Activated naive CD8-positive, alpha-beta T cell treated with anti-CD3 and anti-CD28 coated beads, Interleukin-2, amount 10 ng/mL, durations not matched to agents 7 days and 5 days (primary cell): ENCODE measurements at regions of chr5 and their contacts with region 1.

Region 1: DNA sequence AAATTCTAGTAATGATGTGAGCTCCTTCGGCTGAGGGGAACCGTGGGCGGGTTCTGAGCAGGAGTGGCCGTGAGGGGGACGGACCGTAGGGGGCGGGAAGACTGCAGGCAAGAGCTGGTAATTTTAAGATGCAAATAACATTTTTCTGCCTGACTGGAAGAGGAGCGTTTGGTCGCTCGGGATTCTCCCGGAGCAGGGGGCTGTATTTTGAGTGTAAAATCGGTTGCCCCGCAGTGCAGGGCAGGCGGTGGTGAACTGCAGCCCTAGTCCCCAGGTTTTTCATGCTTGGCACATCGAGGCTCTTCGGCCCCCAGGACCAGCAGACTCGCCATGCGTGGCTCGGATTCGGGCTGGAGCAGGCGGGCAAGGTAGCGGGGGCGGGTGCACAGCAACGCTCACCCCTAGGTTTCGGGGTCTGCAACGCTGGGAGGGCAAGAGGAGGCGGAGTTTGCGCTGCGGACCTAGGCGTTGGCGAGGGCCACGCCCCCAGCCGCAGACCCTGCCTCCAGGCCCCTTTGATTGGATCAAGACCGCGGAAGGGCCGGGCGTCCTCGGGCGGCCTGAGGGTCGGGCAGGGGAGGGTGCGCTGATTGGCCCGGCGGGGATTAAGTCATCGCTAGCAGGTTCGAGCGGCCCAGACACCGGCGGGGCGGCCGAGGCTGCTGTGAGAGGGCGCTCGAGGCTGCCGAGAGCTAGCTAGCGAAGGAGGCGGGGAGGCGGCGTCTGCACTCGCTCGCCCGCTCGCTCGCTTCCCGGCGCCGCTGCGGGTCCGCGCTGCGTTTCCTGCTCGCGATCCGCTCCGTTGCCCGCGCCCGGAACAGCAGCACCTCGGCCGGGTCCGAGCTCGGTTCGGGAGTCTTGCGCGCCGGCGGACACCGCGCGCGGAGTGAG is at the start of gene ARHGAP26:
- DNase-seq: peak; percentile 92
- ATAC-seq: peak; percentile 97
- H3K4me3 Mint-ChIP-seq: peak within 1 kb of the TSS; percentile 86
- H3K27ac Mint-ChIP-seq: peak within 1 kb of the TSS; percentile 88
- H3K4me1 Mint-ChIP-seq: peaks cover 31% of the 10 kb centered on the region
- H3K27me3 Mint-ChIP-seq: no peaks in the 10 kb centered on the region
- total RNA-seq, gene ARHGAP26: 30.6 to 32.0 TPM

Region 2: GRCh38 chr5:142783601-142784341 is 13.8 kb after region 1 on chr5:
- POLR2A ChIA-PET with region 1: interaction called, 31 read pairs
- DNase-seq: no peak
- ATAC-seq: peak; percentile 84
- H3K4me3 Mint-ChIP-seq: peak overlapping the region; percentile 31
- H3K27ac Mint-ChIP-seq: peak overlapping the region; percentile 60
- H3K4me1 Mint-ChIP-seq: peaks cover 44% of the 10 kb centered on the region
- H3K27me3 Mint-ChIP-seq: no peaks in the 10 kb centered on the region

Region 3: DNA sequence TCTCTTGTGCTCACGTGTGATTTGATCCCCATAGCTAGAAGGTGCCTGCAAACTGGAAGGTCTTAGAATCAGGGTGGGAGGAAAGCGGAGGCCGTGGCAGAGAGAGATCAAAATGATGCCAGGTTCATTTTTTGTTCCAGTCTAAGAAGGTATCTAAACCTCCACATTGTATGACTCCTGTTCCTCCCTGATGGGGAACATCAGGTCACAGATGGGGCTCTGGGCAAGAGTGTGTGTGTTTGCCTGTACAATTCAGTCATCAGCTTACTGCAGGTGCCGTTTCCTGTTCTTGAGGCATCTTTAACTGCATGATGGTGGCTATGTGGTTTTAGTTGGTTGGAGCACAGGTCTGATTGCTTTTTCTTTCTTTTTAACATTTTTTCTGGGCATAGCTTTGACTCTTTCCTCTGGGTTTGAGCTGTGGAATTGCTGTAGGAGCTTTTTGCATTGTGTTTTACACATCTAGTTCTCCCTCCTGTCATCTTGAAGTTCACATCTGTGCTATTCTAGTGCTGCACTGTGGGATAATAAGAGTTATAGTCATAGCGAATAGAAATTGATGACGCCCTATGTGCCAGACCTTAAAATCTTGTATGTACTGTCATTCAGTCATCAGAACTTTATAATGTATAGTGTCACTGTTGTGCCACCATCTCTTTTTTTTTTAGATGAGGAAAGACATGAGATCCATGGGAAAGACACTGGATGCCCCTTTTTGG is 30.9 kb after region 1 on chr5:
- POLR2A ChIA-PET with region 1: interaction called, 55 read pairs
- DNase-seq: peak; percentile 49
- ATAC-seq: peak; percentile 83
- H3K4me3 Mint-ChIP-seq: peak overlapping the region; percentile 83
- H3K27ac Mint-ChIP-seq: peak overlapping the region; percentile 92
- H3K4me1 Mint-ChIP-seq: peaks cover 60% of the 10 kb centered on the region
- H3K27me3 Mint-ChIP-seq: no peaks in the 10 kb centered on the region

Region 4: GRCh38 chr5:142872795-142873194 is 102.8 kb after region 1 on chr5:
- POLR2A ChIA-PET with region 1: interaction called, 15 read pairs
- DNase-seq: no peak
- ATAC-seq: no peak
- H3K4me3 Mint-ChIP-seq: no peak overlapping the region
- H3K27ac Mint-ChIP-seq: no peak overlapping the region
- H3K4me1 Mint-ChIP-seq: no peaks in the 10 kb centered on the region
- H3K27me3 Mint-ChIP-seq: no peaks in the 10 kb centered on the region